ENCODE measurements at regions of chr17 and their contacts with region 1.

Region 1: GRCh38 chr17:74659898-74660297 is 36.4 kb upstream of the CD300E start:
- DNase-seq: no peak
- H3K4me3 ChIP-seq: no peak overlapping the region
- H3K27ac ChIP-seq: no peak overlapping the region
- H3K4me1 ChIP-seq: no peaks in the 10 kb centered on the region; a peak in 1 of 4 replicates
- H3K27me3 ChIP-seq: no peaks in the 10 kb centered on the region
- CTCF ChIP-seq: no peak
- EP300 ChIP-seq: no peak
- RAD21 ChIP-seq: no peak

Region 2: DNA sequence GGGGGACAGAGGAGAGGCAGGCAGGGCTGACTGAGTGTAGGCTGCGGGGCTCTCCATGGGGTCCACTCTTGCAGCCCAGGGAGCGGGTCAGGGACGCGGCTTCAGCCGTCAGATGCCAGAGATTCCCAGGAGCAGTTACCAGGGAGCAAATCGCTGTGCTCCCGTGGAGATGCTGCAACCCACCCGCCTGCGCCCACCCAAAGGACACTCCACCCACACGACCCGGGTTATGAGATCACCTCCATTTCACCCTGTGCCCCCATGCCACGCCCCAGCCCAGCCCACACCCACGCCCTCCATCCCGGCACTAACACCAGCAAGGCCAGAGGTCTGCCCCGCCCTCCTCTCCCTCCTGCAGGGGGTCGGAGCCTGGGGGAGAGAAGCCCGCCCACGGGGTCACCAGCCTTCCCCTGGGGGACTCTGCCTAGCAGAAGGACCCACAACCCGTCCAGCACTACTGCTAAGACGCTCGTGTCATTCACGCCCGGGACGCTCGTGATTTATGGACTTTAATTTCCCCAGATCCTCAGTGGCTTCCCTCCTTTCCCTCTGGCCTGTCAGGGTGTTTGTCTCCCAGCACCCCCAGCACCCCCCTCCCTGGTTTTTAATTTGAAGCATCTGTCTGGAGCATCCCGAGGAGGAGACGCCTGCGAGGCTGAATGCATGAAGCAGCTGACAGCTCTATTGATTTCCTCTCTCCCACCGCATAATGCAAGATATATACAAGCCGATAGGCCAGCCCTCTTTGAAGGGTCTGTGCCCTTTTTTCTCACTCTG is 463.2 kb before region 1 on chr17:
- CTCF ChIA-PET with region 1: no interaction called
- POLR2A ChIA-PET with region 1: no interaction called
- DNase-seq: peak; percentile 60
- H3K4me3 ChIP-seq: no peak overlapping the region
- H3K27ac ChIP-seq: no peak overlapping the region
- H3K4me1 ChIP-seq: peaks cover 0 to 13% of the 10 kb centered on the region in 2 experiments; a peak in 1 of 4 replicates
- H3K27me3 ChIP-seq: peaks cover 34% of the 10 kb centered on the region
- CTCF ChIP-seq: no peak
- EP300 ChIP-seq: no peak
- RAD21 ChIP-seq: no peak

Region 3: DNA sequence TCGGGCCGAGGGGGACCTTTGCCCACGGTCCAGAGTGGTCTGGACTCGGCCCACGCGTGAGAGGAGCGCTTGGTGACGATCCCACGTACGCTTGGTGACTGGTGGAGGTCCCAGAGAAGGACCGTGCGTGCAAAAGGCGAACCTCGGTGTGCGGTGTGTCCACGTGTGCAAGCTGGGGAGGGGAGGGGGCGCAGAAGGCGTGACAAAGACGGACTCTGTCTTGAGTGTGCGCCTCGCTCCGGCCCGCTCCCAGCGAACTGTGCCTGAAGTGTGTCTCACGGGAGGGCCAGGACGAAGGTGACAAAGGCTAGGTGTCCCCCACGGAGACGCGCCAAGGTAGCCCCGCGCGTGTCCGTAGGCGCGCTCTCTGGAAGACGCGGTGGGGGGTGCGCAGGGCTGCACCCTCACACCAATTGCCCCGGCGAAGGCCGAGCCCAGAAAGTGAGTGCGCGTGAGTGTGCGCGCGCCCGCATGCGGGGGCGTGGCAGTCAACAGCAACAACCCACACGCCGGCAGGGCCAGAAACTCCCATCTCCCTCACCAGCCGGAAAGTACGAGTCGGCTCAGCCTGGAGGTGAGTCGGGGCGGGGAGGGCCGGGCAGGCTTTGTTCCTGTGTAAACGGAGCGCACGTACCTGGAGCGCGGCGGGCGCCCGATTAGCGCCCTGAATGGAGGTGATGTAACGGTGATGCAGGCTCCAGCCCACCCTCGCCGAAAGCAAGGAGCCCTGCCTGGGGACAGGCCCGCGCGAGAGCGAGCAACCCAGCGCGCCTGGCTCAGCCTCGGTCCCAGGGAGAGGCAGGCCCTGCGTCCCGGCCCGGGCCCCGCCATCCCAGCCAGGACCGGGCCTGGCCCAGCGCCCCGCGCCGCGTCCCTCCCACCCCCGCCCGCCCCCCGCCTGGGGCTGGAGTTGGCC is 228.1 kb before region 1 on chr17 and contains the start of gene GPRC5C:
- CTCF ChIA-PET with region 1: no interaction called
- POLR2A ChIA-PET with region 1: no interaction called
- DNase-seq: peak; percentile 84
- H3K4me3 ChIP-seq: peak within 1 kb of the TSS in 1 of 2 experiments; percentile 39; a peak in 1 of 4 replicates
- H3K27ac ChIP-seq: no peak within 1 kb of the TSS
- H3K4me1 ChIP-seq: peaks cover 0 to 11% of the 10 kb centered on the region in 2 experiments; a peak in 1 of 4 replicates
- H3K27me3 ChIP-seq: no peaks in the 10 kb centered on the region
- CTCF ChIP-seq: no peak
- EP300 ChIP-seq: no peak
- RAD21 ChIP-seq: no peak
- polyA plus RNA-seq, gene GPRC5C: not detected in 2 replicates

Region 4: GRCh38 chr17:74442670-74443515 is 217.0 kb before region 1 on chr17:
- CTCF ChIA-PET with region 1: no interaction called
- POLR2A ChIA-PET with region 1: no interaction called
- DNase-seq: peak; percentile 60
- H3K4me3 ChIP-seq: no peak overlapping the region
- H3K27ac ChIP-seq: no peak overlapping the region
- H3K4me1 ChIP-seq: peaks cover 0 to 10% of the 10 kb centered on the region in 2 experiments; a peak in 1 of 4 replicates
- H3K27me3 ChIP-seq: no peaks in the 10 kb centered on the region
- CTCF ChIP-seq: no peak
- EP300 ChIP-seq: no peak
- RAD21 ChIP-seq: no peak

Region 5: DNA sequence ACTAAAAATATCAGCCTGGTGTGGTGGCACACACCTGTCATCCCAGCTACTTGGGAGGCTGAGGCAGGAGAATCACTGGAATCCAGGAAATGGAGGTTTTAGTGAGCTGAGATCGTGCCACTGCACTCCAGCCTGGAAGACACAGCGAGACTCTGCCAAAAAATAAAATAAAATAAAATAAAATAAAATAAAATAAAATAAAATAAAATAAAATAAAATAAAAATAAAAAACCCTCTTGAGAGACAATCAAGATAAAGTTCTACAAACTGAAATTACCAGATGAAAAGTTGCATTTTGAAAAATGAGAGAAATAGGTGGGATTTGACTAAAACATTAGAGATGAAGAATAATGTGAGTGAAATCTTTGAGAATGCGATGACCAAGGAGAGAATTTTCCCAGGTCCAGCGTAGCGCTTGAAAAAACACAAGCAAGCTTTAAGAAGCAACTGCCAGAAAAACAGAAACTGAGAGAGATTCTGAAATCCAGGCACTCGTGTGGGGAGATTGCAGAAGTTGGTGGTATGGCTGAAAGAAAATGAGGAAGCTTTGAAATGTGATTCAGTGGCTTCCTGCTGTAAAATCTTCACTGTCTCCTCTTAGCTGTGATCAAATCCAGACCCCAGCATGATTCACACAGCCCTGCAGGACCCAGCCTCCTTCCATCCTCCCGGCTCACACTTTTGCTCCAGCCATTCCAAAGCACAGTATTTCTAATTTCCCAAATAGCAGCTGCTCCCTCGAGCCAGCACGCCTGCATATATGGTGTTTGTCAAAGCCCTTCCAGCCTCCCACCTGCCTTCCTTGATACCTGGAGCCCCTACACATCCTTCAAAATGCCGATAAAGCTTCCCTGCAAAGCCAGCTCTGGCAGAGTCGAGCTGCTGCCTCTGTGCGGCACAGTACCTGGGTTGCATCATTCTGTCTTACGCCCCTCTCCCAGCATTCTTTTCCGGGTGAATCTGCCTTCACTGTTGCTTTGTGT is 28.1 kb before region 1 on chr17:
- CTCF ChIA-PET with region 1: interaction called, 18 read pairs
- POLR2A ChIA-PET with region 1: interaction called, 5 read pairs
- DNase-seq: peak; percentile 80
- H3K4me3 ChIP-seq: no peak overlapping the region
- H3K27ac ChIP-seq: no peak overlapping the region
- H3K4me1 ChIP-seq: peaks cover 0 to 4% of the 10 kb centered on the region in 2 experiments; a peak in 1 of 4 replicates
- H3K27me3 ChIP-seq: no peaks in the 10 kb centered on the region
- CTCF ChIP-seq: no peak
- EP300 ChIP-seq: no peak
- RAD21 ChIP-seq: no peak

Region 6: GRCh38 chr17:74671031-74671771 is 11.3 kb after region 1 on chr17:
- CTCF ChIA-PET with region 1: interaction called, 80 read pairs
- POLR2A ChIA-PET with region 1: interaction called, 3 read pairs
- DNase-seq: peak; percentile 67
- H3K4me3 ChIP-seq: no peak overlapping the region
- H3K27ac ChIP-seq: no peak overlapping the region
- H3K4me1 ChIP-seq: peaks cover 0 to 6% of the 10 kb centered on the region in 2 experiments; a peak in 1 of 4 replicates
- H3K27me3 ChIP-seq: no peaks in the 10 kb centered on the region
- CTCF ChIP-seq: no peak
- EP300 ChIP-seq: no peak
- RAD21 ChIP-seq: no peak

Region 7: DNA sequence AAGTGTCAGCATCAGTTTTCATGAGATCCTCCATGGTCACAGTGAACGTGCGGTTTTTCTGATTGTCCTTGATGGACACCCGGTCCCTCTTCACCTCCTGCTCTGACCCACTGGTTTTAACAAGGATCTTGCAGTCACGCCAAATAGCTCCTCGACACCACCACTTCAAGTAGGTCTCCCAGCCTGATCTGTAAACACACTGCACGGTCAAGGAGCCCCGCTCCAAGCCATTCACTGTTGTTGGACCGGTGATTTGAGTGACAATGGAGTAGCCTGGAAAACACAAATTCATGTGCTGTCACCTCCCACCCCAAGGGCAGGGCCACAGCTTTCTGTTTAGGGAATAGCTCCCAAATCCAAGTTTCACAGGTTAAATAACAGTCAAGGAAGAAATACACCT is 44.6 kb after region 1 on chr17:
- CTCF ChIA-PET with region 1: interaction called, 10 read pairs
- POLR2A ChIA-PET with region 1: no interaction called
- DNase-seq: no peak
- H3K4me3 ChIP-seq: no peak overlapping the region
- H3K27ac ChIP-seq: no peak overlapping the region
- H3K4me1 ChIP-seq: no peaks in the 10 kb centered on the region
- H3K27me3 ChIP-seq: no peaks in the 10 kb centered on the region
- CTCF ChIP-seq: no peak
- EP300 ChIP-seq: no peak
- RAD21 ChIP-seq: no peak

Region 8: DNA sequence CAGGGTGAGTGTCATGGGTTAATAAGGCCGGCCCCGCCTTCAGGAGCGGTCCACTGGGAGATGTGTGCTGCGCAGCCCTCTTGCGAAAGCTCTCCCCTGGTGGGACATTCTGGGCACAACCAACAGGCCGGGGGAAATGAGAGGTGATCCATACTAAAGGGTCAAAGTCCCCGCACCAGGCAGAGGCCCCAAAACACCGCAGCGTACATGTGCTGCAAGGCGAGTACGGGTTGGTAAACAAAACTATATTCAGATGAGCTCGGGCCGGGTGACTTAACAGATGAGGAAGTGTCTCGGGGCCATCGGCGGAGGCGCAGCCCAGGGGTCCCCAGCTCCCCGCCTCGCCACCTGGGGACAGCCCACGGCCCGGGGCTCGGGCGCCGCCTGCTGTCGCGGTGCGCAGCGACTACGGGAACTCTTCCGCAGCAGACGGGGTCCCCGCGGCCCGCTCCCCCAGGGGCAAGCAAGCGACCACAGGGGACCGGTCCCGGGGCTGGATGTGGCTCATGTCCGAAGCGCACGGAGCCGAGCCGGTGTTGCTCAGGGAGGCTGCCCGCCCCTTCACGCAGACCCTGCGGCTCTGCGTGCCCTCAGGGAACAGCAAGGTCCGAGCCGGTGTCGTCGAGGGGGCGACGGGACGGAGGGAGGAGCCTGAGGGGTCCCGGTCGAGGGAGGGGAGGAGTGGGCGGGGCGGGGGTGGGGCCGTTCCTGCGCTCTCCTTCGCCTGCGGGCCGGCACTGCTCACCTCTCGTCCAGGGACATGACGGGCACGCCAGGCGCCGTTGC is 76.8 kb after region 1 on chr17 and contains the start of gene RAB37:
- CTCF ChIA-PET with region 1: interaction called, 301 read pairs
- POLR2A ChIA-PET with region 1: interaction called, 4 read pairs
- DNase-seq: peak; percentile 82
- H3K4me3 ChIP-seq: no peak within 1 kb of the TSS; a peak in 1 of 4 replicates
- H3K27ac ChIP-seq: no peak within 1 kb of the TSS
- H3K4me1 ChIP-seq: no peaks in the 10 kb centered on the region; a peak in 1 of 4 replicates
- H3K27me3 ChIP-seq: peaks cover 54% of the 10 kb centered on the region
- CTCF ChIP-seq: peak; percentile 43
- EP300 ChIP-seq: no peak
- RAD21 ChIP-seq: peak; percentile 56
- polyA plus RNA-seq, gene RAB37: 0.13 and 0.25 TPM in 2 replicates

Region 9: GRCh38 chr17:74770498-74771318 is 110.8 kb after region 1 on chr17:
- CTCF ChIA-PET with region 1: interaction called, 35 read pairs
- POLR2A ChIA-PET with region 1: no interaction called
- DNase-seq: peak; percentile 91
- H3K4me3 ChIP-seq: no peak overlapping the region
- H3K27ac ChIP-seq: no peak overlapping the region
- H3K4me1 ChIP-seq: peaks cover 23 to 29% of the 10 kb centered on the region in 2 experiments; a peak in 3 of 4 replicates
- H3K27me3 ChIP-seq: no peaks in the 10 kb centered on the region
- CTCF ChIP-seq: peak; percentile 85
- EP300 ChIP-seq: no peak
- RAD21 ChIP-seq: peak; percentile 98

Region 10: DNA sequence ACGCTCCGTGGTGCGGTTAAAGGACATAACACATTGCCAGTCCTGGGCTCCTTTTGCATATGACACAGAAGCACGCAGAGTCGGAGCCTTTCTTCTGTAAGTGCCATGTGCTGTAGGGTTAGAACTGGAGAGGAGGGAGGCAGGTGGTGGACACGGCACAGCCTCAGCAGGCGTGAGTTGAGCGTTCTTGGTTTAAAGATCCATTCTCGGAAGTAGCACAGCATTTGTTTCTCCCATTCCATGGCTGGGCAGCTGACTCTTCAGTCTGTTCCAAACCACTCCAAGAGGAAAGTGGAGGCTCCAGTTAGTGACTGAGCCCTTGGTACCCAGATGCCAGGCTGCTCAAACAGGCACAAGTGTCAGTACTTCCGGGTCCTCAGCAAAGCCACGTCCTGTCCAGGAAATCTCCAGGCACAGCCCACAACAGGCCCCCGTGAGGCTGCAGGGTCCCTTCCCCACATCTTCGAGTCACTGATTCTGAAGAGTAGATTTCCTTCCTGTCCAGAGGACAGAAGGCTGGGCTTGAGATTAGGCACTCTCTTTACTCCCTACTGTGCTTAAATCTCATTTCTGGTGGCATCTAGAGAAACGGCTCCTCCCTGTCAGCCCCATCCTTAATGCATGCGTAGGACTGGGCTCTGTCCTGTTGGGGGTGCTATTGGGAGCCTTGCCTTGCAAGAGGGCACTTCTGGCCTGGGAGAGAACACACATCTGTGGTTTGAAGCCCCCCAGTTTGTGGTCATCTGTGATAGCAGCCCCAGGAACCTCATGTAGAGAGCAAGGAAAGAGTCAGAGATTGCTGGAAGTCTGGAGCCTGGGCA is 155.9 kb after region 1 on chr17:
- CTCF ChIA-PET with region 1: no interaction called
- POLR2A ChIA-PET with region 1: no interaction called
- DNase-seq: no peak
- H3K4me3 ChIP-seq: no peak overlapping the region
- H3K27ac ChIP-seq: no peak overlapping the region
- H3K4me1 ChIP-seq: no peaks in the 10 kb centered on the region; a peak in 1 of 4 replicates
- H3K27me3 ChIP-seq: no peaks in the 10 kb centered on the region
- CTCF ChIP-seq: peak; percentile 47
- EP300 ChIP-seq: no peak
- RAD21 ChIP-seq: no peak

Region 11: DNA sequence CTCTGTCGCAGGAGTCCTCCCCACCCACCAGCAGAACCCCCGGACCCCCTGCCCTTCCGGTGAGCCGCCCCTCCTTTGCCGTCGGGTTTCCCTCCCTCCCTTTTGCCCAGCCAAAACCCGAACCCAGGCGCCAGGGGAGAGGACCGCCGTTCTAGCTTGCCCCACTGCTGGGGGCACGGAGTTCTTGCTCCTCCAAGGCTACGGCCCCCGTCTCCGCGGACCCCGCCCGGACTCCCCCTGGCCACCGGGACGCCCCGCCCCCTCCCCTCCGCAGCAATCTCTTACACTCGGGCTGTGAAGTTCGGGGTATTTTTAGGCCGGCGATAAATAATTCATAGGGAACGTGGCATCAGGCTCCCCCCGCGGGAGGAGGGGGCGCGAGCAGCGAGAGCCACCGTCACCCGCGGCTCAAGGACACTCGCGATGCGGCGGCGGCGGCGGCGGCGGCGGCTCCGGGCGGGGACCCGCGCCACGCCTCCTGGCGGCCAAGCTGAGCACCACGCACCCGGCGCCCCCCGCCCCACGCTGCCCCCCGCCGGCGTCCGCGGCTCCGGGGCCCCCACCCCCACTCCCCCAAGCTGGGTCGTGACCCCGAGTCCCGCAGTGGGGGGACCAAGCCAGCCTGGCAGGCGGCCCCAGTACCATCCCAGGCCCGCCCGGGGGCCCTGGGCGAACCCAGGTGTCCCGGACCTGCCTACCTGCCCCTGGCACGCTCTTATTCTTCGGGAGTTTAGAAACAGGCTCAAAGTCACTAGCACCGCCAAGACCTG is 199.7 kb after region 1 on chr17 and contains the start of gene GRIN2C:
- CTCF ChIA-PET with region 1: interaction called, 23 read pairs
- POLR2A ChIA-PET with region 1: no interaction called
- DNase-seq: peak; percentile 93
- H3K4me3 ChIP-seq: peak within 1 kb of the TSS; percentile 45 to 55
- H3K27ac ChIP-seq: no peak within 1 kb of the TSS
- H3K4me1 ChIP-seq: peaks cover 0 to 10% of the 10 kb centered on the region in 2 experiments; a peak in 2 of 4 replicates
- H3K27me3 ChIP-seq: peaks cover 46% of the 10 kb centered on the region
- CTCF ChIP-seq: peak; percentile 54
- EP300 ChIP-seq: no peak; a peak in 1 of 4 replicates
- RAD21 ChIP-seq: no peak
- polyA plus RNA-seq, gene GRIN2C: 0.39 and 0.45 TPM in 2 replicates

Measured in SK-N-SH (cell line).